ENCODE measurements at regions of chr4 and their contacts with region 1.

Region 1: GRCh38 chr4:65495439-65495838 is 174.8 kb downstream of the EPHA5 start:
- DNase-seq: no peak

Region 2: DNA sequence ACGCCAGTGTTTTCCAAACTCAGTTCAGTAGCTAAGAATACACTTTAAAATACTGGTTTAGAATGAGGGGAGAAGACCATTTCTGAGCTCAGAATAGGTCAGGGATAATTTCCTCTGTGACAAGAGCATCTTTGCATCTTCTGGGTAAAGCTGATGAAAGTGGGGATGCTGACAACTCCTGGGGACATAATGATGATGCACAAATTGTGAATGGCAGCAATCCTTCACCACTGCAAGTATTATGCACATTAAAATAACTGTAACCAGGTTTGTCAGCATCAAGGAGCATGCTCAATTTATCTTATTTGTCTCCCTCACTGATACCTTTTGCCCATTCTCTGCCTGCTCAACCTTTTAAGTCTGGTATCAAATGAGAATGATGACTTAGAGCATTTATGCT is 73.3 kb before region 1 on chr4:
- intact Hi-C with region 1: loop called in 1 of 2 experiments (anchors 2 kb)
- DNase-seq: no peak

Measured in posterior vena cava (tissue), 2 donors.